BJ (cell line): ENCODE measurements at regions of chr20 and their contacts with region 1.

Region 1: GRCh38 chr20:63223221-63224207 is 7.6 kb upstream of the YTHDF1 start:
- DNase-seq: no peak
- H3K4me3 ChIP-seq: no peak overlapping the region
- H3K27me3 ChIP-seq: peaks cover 12% of the 10 kb centered on the region
- CTCF ChIP-seq: peak; percentile 82

Region 2: GRCh38 chr20:63206904-63207303 is 16.6 kb before region 1 on chr20:
- CTCF ChIA-PET with region 1: interaction called, 25 read pairs
- POLR2A ChIA-PET with region 1: no interaction called
- DNase-seq: no peak
- H3K4me3 ChIP-seq: no peak overlapping the region
- H3K27me3 ChIP-seq: no peaks in the 10 kb centered on the region
- CTCF ChIP-seq: no peak

Region 3: DNA sequence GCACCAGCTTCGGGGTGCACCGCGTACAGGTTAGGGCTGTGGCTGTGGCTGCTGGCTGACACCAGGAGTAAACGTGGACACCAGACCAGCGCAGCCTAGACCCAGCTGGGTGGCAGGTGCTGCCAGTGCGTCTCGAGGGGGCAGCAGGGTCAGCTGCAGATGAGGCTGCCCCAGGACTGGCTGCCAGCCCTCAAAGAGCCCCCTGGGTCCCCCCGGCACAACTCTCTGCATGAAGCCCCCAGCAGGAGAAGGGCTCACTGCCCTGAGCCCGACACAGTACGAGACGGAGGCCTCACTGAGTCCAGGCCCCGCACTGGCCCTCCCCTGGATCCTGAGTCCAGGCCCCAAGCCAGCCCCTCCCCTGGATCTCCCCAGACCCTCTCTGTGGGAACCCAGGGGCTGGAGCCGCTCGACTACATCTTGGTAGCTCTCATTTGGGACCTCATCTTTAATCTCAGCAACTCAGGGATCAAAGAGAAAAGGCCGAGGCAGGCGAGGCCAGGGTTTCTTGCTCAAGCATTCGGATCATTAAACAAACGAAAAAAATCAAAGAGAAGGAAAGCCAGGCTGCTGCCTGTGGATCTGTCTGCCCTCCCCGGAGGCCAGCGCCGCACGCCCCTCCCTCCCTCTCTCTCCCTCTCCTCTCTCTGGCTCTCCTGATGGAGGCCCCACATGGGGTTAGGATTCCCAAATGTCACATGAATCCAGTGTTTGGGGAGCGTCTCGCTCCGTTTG is 37.7 kb after region 1 on chr20:
- CTCF ChIA-PET with region 1: interaction called, 14 read pairs
- POLR2A ChIA-PET with region 1: no interaction called
- DNase-seq: no peak
- H3K4me3 ChIP-seq: no peak overlapping the region
- H3K27me3 ChIP-seq: peaks cover 60% of the 10 kb centered on the region
- CTCF ChIP-seq: no peak

Region 4: GRCh38 chr20:63290677-63291472 is 67.4 kb after region 1 on chr20:
- CTCF ChIA-PET with region 1: interaction called, 36 read pairs
- POLR2A ChIA-PET with region 1: no interaction called
- DNase-seq: no peak
- H3K4me3 ChIP-seq: no peak overlapping the region
- H3K27me3 ChIP-seq: peaks cover 9% of the 10 kb centered on the region
- CTCF ChIP-seq: peak; percentile 84

Region 5: DNA sequence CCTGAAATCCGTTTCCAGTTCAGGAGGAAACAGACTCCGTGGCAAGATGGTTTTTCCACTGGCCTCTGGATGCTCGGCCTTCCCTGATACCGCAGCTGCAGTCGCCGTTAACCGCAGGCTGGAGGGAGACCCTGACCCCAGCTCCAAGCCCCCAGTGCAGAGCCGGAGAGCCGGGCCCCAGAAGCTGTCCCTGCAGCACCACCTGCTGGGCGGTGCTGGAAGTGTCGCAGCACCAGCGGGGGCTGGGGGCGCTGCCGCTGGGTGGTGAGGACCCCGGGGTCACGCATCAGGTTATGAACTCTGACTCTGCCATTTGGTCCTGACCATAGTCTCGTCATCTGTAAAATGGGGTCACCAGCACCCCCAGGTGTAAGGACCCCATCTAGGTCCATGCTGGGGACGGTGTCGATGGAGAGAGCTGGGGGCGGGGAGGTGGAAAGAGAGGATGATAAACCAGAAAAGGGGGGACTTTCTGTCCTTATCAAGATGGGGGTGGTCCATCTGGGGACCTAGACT is 158.4 kb after region 1 on chr20:
- CTCF ChIA-PET with region 1: interaction called, 37 read pairs
- POLR2A ChIA-PET with region 1: no interaction called
- DNase-seq: no peak
- H3K4me3 ChIP-seq: no peak overlapping the region
- H3K27me3 ChIP-seq: peaks cover 2% of the 10 kb centered on the region; the same call in 1 of the 2 replicates
- CTCF ChIP-seq: peak; percentile 96